Naive thymus-derived CD4-positive, alpha-beta T cell (primary cell): ENCODE measurements at regions of chr7 and their contacts with region 1.

Region 1: GRCh38 chr7:105429746-105430612 is 41.3 kb upstream of the SRPK2 start:
- DNase-seq: peak in 8 of 9 donors; percentile 9 to 66 (median 58)
- ATAC-seq: peak; percentile 76
- H3K4me3 ChIP-seq: no peak overlapping the region
- H3K4me3 Mint-ChIP-seq: no peak overlapping the region
- H3K27ac ChIP-seq: no peak overlapping the region
- H3K27ac Mint-ChIP-seq: peak overlapping the region in 1 of 9 donors; percentile 19
- H3K4me1 ChIP-seq: no peaks in the 10 kb centered on the region
- H3K4me1 Mint-ChIP-seq: peaks cover 0 to 5% (median 0%) of the 10 kb centered on the region in 7 donors
- H3K27me3 ChIP-seq: no peaks in the 10 kb centered on the region
- H3K27me3 Mint-ChIP-seq: no peaks in the 10 kb centered on the region

Region 2: GRCh38 chr7:105141068-105141467 is 288.9 kb before region 1 on chr7:
- CTCF ChIA-PET with region 1: no interaction called
- POLR2A ChIA-PET with region 1: interaction called, 4 read pairs
- intact Hi-C with region 1: loop called in 1 of 2 experiments (anchors 1 kb)
- DNase-seq: peak in 2 of 9 donors; percentile 7 to 12
- ATAC-seq: no peak
- H3K4me3 ChIP-seq: no peak overlapping the region
- H3K4me3 Mint-ChIP-seq: no peak overlapping the region
- H3K27ac ChIP-seq: no peak overlapping the region
- H3K27ac Mint-ChIP-seq: no peak overlapping the region
- H3K4me1 ChIP-seq: no peaks in the 10 kb centered on the region
- H3K4me1 Mint-ChIP-seq: peaks cover 0 to 27% (median 13%) of the 10 kb centered on the region in 7 donors
- H3K27me3 ChIP-seq: no peaks in the 10 kb centered on the region
- H3K27me3 Mint-ChIP-seq: no peaks in the 10 kb centered on the region

Region 3: GRCh38 chr7:105268511-105269392 is 161.2 kb before region 1 on chr7:
- CTCF ChIA-PET with region 1: no interaction called
- POLR2A ChIA-PET with region 1: no interaction called
- intact Hi-C with region 1: loop called in 1 of 2 experiments (anchors 2 kb)
- DNase-seq: peak in 6 of 9 donors; percentile 30 to 58 (median 46)
- ATAC-seq: peak; percentile 83
- H3K4me3 ChIP-seq: peak overlapping the region; percentile 51
- H3K4me3 Mint-ChIP-seq: peak overlapping the region; percentile 85 to 100 (median 94)
- H3K27ac ChIP-seq: peak overlapping the region; percentile 69
- H3K27ac Mint-ChIP-seq: peak overlapping the region; percentile 81 to 96 (median 91)
- H3K4me1 ChIP-seq: peaks cover 13 to 25% of the 10 kb centered on the region in 2 donors
- H3K4me1 Mint-ChIP-seq: peaks cover 34 to 84% (median 71%) of the 10 kb centered on the region in 7 donors
- H3K27me3 ChIP-seq: no peaks in the 10 kb centered on the region
- H3K27me3 Mint-ChIP-seq: no peaks in the 10 kb centered on the region

Region 4: DNA sequence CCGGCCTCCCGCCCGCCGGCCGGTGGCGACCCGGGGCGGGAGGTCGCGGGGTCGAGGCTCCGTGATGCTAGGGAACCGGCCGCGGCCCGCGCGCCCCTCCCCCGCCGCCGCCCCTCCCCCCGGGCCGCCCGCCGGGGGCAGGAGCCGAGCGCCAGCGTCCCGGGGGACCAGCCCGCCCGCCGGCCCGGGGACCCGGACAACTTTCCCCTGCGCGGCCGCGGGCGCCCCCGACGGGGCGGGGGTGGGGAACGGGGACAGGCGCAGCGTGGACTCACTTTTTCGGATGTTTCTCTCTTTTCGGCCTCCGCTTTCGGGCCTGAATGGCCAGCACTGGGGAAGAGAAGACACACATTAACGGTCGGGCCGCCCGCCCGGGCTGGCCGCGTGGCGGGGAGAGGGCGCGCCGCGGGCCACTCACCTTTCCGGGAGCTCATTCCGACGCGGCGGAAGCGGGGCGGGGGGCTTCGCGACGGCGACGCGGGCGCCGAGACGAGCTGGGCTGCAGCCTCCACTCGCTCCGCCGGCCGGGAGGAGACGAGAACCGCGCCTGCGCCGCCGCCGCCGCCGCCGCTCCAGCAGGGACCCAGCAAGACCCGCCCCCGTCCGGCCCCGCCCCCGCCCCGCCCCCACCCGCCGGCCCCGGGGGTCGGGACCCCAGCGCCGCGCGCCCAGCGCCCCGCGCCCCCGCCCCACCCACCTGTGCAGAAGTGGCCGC is 41.4 kb before region 1 on chr7 and contains the start of gene SRPK2:
- CTCF ChIA-PET with region 1: interaction called, 3 read pairs
- POLR2A ChIA-PET with region 1: interaction called, 3 read pairs
- intact Hi-C with region 1: loop called in 1 of 2 experiments (anchors 2 kb)
- DNase-seq: peak; percentile 61 to 79 (median 73)
- ATAC-seq: peak; percentile 86
- H3K4me3 ChIP-seq: peak within 1 kb of the TSS; percentile 77
- H3K4me3 Mint-ChIP-seq: peak within 1 kb of the TSS; percentile 91 to 100 (median 98)
- H3K27ac ChIP-seq: peak within 1 kb of the TSS; percentile 82
- H3K27ac Mint-ChIP-seq: peak within 1 kb of the TSS; percentile 90 to 99 (median 95)
- H3K4me1 ChIP-seq: peaks cover 5 to 12% of the 10 kb centered on the region in 2 donors
- H3K4me1 Mint-ChIP-seq: peaks cover 19 to 46% (median 40%) of the 10 kb centered on the region in 7 donors
- H3K27me3 ChIP-seq: no peaks in the 10 kb centered on the region
- H3K27me3 Mint-ChIP-seq: peaks cover 0 to 2% (median 0%) of the 10 kb centered on the region in 5 donors
- total RNA-seq, gene SRPK2: 45.1 to 56.7 (median 46.8) TPM

Region 5: DNA sequence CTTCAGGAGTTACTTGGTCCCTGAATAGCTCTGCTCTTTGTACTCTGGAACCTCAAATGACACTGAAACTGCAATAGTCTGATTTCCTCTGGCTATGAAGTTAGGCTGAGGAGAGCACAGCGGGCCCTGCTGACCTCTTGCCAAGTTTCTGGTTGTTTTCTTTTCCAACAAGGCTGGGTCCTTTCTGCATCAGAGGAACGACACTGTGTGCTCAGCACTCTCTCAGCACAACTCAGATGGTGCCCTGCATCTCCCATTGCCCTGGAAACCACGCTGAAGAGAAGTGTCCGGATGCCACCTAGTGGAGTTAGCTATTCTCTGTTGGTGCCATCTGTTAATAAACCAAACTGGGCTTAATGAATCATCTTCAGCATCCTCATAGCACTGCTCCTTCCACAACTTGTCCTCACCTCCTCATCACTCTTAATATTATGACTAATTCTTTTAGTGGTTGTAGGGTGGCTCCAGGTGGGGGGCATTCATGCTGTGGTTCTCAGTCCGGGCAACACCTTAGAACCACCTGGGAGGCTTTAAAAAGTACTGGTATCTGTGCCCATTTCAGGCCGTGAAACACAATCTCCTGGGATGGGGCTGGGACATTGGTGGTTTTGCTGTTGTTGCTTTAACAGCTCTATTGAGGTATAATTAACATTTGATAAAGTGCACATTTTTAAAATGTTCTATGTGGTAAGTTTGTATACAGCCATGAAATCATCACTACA is 159.5 kb after region 1 on chr7:
- CTCF ChIA-PET with region 1: no interaction called
- POLR2A ChIA-PET with region 1: no interaction called
- intact Hi-C with region 1: loop called in 1 of 2 experiments (anchors 2 kb)
- DNase-seq: peak in 8 of 9 donors; percentile 16 to 61 (median 42)
- ATAC-seq: peak; percentile 87
- H3K4me3 ChIP-seq: no peak overlapping the region
- H3K4me3 Mint-ChIP-seq: no peak overlapping the region
- H3K27ac ChIP-seq: no peak overlapping the region
- H3K27ac Mint-ChIP-seq: peak overlapping the region in 3 of 9 donors; percentile 4 to 70 (median 69)
- H3K4me1 ChIP-seq: no peaks in the 10 kb centered on the region
- H3K4me1 Mint-ChIP-seq: peaks cover 0 to 17% (median 4%) of the 10 kb centered on the region in 7 donors
- H3K27me3 ChIP-seq: no peaks in the 10 kb centered on the region
- H3K27me3 Mint-ChIP-seq: peaks cover 0 to 9% (median 0%) of the 10 kb centered on the region in 5 donors